Endothelial cell of umbilical vein (primary cell): ENCODE measurements at regions of chr16 and their contacts with region 1.

Region 1: DNA sequence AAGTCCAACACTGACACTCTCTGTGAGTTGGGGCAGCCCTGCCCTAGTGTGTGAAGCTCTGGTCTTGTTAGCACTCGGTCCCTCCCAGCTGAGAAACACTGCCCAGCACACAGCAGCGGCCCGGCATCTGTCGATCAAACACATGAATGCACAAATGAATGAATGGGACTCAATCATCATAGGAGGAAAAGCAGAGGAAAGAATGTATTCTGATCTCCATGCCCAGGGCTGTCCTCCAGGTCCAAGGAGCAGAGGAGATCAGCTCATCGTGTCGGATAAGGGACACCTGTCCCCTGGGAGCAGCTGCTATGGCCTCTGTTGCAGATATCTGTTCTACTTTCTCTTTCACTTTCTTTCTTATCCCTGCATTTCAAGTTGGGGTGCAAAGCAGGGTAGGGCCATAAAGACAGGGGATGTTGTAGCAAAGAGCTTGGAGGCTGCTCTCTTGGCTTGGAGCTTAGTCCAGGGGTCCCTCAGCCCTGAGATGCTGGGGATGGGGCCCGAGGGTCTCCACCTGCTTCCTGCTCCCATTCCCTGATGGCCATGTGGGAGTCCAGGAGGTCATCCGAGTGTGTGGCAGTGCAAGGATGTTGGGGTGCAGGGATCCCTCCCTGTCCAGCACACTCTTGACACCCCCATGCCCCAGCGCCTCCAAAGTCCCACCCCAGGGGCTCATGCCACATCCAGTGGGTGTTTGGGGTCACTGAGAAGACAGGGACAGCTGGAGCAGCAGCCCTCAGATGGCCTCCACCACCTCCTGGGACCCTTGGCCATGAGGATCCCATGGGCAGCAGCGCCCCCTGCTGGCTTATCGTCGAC is 88.2 kb downstream of the IRF8 start:
- DNase-seq: no peak
- H3K4me3 ChIP-seq: no peak overlapping the region
- H3K27ac ChIP-seq: no peak overlapping the region
- H3K4me1 ChIP-seq: no peaks in the 10 kb centered on the region
- H3K27me3 ChIP-seq: peaks cover 0 to 5% of the 10 kb centered on the region in 2 experiments
- CTCF ChIP-seq: peak in 1 of 2 donors; percentile 50
- POLR2A ChIP-seq: no peak

Region 2: DNA sequence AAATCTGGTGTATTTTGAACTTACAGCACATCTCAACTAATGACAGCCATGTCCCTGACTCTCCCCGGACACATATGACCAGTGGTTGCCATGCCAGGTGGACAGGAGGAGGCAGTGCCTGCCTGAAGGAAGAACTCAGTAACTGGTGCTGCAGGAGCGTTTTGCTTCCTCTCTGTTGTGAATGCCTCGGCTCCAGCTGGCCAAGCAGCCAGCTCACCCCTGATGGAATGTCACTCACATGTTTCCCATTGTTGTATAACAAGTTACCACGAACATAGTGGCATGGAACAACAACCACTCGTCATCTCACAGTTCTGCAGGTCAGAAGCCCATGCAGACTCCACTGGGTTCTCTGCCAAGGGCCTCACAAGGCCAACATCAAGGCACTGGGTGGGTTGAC is 108.3 kb before region 1 on chr16:
- CTCF ChIA-PET with region 1: interaction called, 15 read pairs
- POLR2A ChIA-PET with region 1: no interaction called
- dilution Hi-C with region 1: no loop called
- intact Hi-C with region 1: loop called (anchors 2 kb)
- DNase-seq: peak; percentile 92
- H3K4me3 ChIP-seq: no peak overlapping the region
- H3K27ac ChIP-seq: no peak overlapping the region
- H3K4me1 ChIP-seq: peaks cover 3% of the 10 kb centered on the region
- H3K27me3 ChIP-seq: peaks cover 3 to 13% of the 10 kb centered on the region in 2 experiments
- CTCF ChIP-seq: peak; percentile 5 to 25
- POLR2A ChIP-seq: no peak

Region 3: GRCh38 chr16:85963753-85964285 is 23.3 kb before region 1 on chr16:
- CTCF ChIA-PET with region 1: no interaction called
- POLR2A ChIA-PET with region 1: no interaction called
- dilution Hi-C with region 1: no loop called
- intact Hi-C with region 1: no loop called
- DNase-seq: no peak
- H3K4me3 ChIP-seq: no peak overlapping the region
- H3K27ac ChIP-seq: no peak overlapping the region
- H3K4me1 ChIP-seq: no peaks in the 10 kb centered on the region
- H3K27me3 ChIP-seq: no peaks in the 10 kb centered on the region
- CTCF ChIP-seq: no peak
- POLR2A ChIP-seq: no peak

Region 4: GRCh38 chr16:86016201-86016871 is 29.2 kb after region 1 on chr16:
- CTCF ChIA-PET with region 1: interaction called, 16 read pairs
- POLR2A ChIA-PET with region 1: no interaction called
- dilution Hi-C with region 1: no loop called
- intact Hi-C with region 1: loop called (anchors 2 kb)
- DNase-seq: peak; percentile 62
- H3K4me3 ChIP-seq: no peak overlapping the region
- H3K27ac ChIP-seq: no peak overlapping the region
- H3K4me1 ChIP-seq: no peaks in the 10 kb centered on the region
- H3K27me3 ChIP-seq: no peaks in the 10 kb centered on the region
- CTCF ChIP-seq: peak; percentile 57 to 72
- POLR2A ChIP-seq: no peak